Gastrocnemius medialis (tissue), 4 donors: ENCODE measurements at regions of chr2 and their contacts with region 1.

Region 1: DNA sequence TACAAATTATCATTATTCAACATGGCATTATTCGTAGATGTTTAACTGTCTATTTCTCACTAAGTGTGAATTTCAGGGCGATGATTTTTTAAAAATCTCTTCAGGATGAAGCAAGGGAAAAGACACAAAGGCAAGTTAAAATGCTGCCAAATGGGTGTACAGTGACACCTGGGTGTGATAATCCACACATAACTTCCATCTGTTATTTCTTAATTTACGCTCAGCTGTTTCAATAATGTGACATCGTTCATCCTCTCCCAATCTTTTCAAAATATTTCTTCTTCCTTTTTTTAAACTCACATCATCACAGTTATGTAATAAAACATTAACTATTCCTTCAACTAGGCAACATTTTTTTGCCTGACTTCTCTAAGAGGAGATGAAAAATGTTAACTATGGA is 10.6 kb downstream of the PDE1A start:
- DNase-seq: no peak
- ATAC-seq: no peak
- H3K4me3 ChIP-seq: no peak overlapping the region
- H3K27ac ChIP-seq: peak overlapping the region in 1 of 4 donors; percentile 12
- H3K4me1 ChIP-seq: no peaks in the 10 kb centered on the region
- H3K27me3 ChIP-seq: no peaks in the 10 kb centered on the region
- CTCF ChIP-seq: no peak
- POLR2A ChIP-seq: no peak

Region 2: GRCh38 chr2:181594322-181594721 is 821.9 kb before region 1 on chr2:
- in situ Hi-C with region 1: no loop called
- intact Hi-C with region 1: no loop called
- DNase-seq: no peak
- ATAC-seq: no peak
- H3K4me3 ChIP-seq: no peak overlapping the region
- H3K27ac ChIP-seq: no peak overlapping the region
- H3K4me1 ChIP-seq: no peaks in the 10 kb centered on the region
- H3K27me3 ChIP-seq: no peaks in the 10 kb centered on the region
- CTCF ChIP-seq: no peak
- POLR2A ChIP-seq: no peak

Region 3: DNA sequence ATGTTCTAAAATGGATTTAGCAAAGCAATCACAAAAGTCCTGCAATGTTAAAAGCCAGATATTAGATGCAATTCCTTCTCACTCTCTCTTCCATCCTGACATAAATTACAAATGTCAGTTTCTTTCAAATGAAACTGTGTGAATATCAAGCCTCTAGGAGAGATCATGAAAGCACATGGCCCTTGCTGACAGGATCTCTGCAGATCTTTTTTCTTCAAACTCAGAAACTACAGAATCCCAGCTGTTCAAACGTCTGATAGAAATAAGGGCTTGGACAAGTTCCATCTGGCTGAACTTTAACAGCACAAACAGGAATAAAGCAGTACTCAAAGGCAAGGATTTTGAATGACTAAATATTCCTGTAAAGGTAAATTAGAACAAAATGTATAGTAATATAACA is 37.0 kb before region 1 on chr2:
- in situ Hi-C with region 1: no loop called
- intact Hi-C with region 1: loop called (anchors 5 kb)
- DNase-seq: no peak
- ATAC-seq: peak in 1 of 2 donors; percentile 39
- H3K4me3 ChIP-seq: no peak overlapping the region
- H3K27ac ChIP-seq: no peak overlapping the region
- H3K4me1 ChIP-seq: no peaks in the 10 kb centered on the region
- H3K27me3 ChIP-seq: no peaks in the 10 kb centered on the region
- CTCF ChIP-seq: no peak
- POLR2A ChIP-seq: no peak